Right cardiac atrium (tissue), 5 donors: ENCODE measurements at regions of chr17 and their contacts with region 1.

Region 1: GRCh38 chr17:40362696-40363110 is 1.8 kb downstream of the GJD3 start:
- DNase-seq: peak; percentile 76 to 87 (median 86)
- ATAC-seq: peak; percentile 18 to 56
- H3K4me3 ChIP-seq: peak overlapping the region; percentile 47
- H3K27ac ChIP-seq: no peak overlapping the region
- H3K4me1 ChIP-seq: no peaks in the 10 kb centered on the region
- H3K27me3 ChIP-seq: no peaks in the 10 kb centered on the region

Region 2: GRCh38 chr17:40417609-40418427 is 55.1 kb after region 1 on chr17 and contains the start of gene TOP2A:
- intact Hi-C with region 1: loop called in 3 of 4 experiments (anchors 5 to 10 kb)
- DNase-seq: peak; percentile 93 to 95 (median 93)
- ATAC-seq: peak; percentile 100
- H3K4me3 ChIP-seq: peak within 1 kb of the TSS; percentile 50
- H3K27ac ChIP-seq: peak within 1 kb of the TSS; percentile 13
- H3K4me1 ChIP-seq: no peaks in the 10 kb centered on the region
- H3K27me3 ChIP-seq: no peaks in the 10 kb centered on the region
- total RNA-seq, gene TOP2A: 0.22 to 5.9 (median 3.2) TPM

Region 3: GRCh38 chr17:40463122-40463550 is 100.4 kb after region 1 on chr17:
- intact Hi-C with region 1: no loop called
- DNase-seq: peak; percentile 52 to 76 (median 74)
- ATAC-seq: peak; percentile 15 to 20
- H3K4me3 ChIP-seq: no peak overlapping the region
- H3K27ac ChIP-seq: no peak overlapping the region
- H3K4me1 ChIP-seq: peaks cover 4% of the 10 kb centered on the region
- H3K27me3 ChIP-seq: no peaks in the 10 kb centered on the region

Region 4: DNA sequence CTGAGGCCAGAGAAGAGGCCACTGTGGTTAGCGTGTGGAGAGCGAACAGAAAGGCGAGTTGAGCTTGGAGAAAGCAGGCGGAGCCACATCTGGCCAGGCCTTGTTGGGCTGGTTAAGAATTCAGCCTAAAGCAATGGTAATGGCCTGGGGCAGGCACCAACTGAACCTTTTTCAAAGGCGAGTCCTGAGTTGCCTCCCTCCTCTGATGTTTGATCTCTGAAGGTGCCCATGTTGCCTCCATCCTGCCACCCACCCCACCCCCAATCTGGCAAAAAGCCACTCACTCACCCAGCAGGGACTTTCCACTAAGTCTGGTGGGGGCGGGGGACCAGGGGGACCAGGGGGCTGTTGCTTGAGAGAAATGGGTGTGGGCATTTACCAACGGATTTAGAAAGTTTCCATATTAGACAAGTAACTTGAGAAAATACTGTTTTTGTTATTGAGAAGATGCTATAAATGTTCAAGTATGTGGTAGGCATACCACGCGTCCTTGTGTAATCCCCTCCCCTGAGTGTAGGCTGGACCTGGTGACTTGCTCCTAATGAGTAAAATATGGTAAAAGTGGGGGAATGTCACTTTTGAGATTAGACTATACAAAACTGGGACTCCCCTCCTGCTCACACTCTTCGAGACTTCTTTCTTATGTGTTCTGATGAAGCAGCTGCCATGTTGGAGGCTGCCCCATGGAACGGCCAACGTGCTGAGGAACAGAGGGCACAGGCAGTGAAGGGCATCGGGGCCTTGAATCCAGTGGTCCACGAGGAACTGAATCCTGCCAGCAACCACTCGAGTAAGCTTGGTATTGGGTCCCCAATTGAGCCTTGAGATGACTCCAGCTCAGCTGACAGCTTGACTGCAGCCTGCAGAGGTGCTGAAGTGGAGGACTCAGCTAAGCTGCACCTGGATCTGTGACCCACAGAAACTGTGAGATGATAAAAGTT is 168.6 kb after region 1 on chr17:
- intact Hi-C with region 1: loop called (anchors 5 to 10 kb)
- DNase-seq: no peak
- ATAC-seq: no peak
- H3K4me3 ChIP-seq: no peak overlapping the region
- H3K27ac ChIP-seq: no peak overlapping the region
- H3K4me1 ChIP-seq: peaks cover 6% of the 10 kb centered on the region
- H3K27me3 ChIP-seq: no peaks in the 10 kb centered on the region